ENCODE measurements at regions of chr9 and their contacts with region 1.

Region 1: GRCh38 chr9:8179381-8180053 is 379.9 kb upstream of the DMAC1 start:
- DNase-seq: no peak
- H3K4me3 ChIP-seq: no peak overlapping the region
- H3K27ac ChIP-seq: no peak overlapping the region
- H3K4me1 ChIP-seq: no peaks in the 10 kb centered on the region
- H3K27me3 ChIP-seq: no peaks in the 10 kb centered on the region
- CTCF ChIP-seq: no peak

Region 2: DNA sequence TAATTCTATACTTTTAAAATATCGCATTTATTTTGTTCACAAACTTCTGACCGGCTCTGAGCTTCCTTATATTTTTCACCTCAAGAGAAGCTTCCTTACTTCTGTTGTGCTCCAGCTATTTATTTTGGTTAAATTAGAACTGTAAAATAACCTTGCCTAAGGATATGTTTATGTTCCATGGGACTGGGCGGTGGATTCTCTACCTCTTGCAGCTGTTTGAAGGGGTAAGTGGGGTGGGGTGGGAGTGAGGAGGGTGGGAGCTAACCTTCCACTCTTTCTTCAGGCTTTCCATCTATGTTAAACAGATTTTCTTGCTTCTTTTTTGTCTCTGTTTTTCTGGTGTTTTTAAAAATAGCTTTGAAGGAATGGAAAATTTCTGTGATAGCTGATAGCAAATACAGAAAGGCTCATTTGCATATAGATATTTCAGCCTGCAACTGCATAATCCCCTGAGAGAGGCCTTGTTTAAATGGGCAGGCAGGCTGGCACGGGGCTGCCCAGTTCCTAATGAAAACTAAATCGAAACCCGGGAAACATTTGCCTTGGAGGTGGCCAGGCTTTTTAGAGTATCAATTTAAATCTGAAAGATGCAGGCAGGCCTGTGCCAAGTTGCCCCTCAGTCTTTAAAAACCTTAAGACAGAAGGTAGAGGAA is 257.8 kb before region 1 on chr9:
- CTCF ChIA-PET with region 1: no interaction called
- POLR2A ChIA-PET with region 1: no interaction called
- intact Hi-C with region 1: loop called (anchors 10 kb)
- DNase-seq: no peak
- H3K4me3 ChIP-seq: no peak overlapping the region
- H3K27ac ChIP-seq: no peak overlapping the region
- H3K4me1 ChIP-seq: no peaks in the 10 kb centered on the region
- H3K27me3 ChIP-seq: no peaks in the 10 kb centered on the region
- CTCF ChIP-seq: no peak

Region 3: DNA sequence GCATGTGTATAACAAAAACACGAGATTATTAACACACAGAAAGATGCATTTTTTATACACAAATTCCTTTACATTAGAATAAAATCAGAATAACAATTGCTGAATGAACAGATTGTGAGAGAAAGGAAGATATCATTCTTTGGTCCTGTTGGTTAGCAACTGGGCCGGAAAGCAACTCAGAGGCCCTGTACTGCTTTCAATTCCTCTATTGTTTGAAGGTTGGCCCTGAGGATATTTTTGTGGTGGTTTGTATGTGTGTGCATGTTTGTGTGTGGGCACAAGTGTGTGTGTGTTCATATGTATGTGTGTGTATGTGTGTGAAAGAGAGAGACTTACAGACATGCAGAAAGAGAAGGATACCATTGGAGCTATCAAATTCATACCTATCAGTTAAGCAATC is 23.2 kb before region 1 on chr9:
- CTCF ChIA-PET with region 1: no interaction called
- POLR2A ChIA-PET with region 1: no interaction called
- intact Hi-C with region 1: no loop called
- DNase-seq: no peak
- H3K4me3 ChIP-seq: no peak overlapping the region
- H3K27ac ChIP-seq: no peak overlapping the region
- H3K4me1 ChIP-seq: no peaks in the 10 kb centered on the region
- H3K27me3 ChIP-seq: no peaks in the 10 kb centered on the region
- CTCF ChIP-seq: no peak

Measured in A673 (cell line).